ENCODE measurements at regions of chrX and their contacts with region 1.

Region 1: DNA sequence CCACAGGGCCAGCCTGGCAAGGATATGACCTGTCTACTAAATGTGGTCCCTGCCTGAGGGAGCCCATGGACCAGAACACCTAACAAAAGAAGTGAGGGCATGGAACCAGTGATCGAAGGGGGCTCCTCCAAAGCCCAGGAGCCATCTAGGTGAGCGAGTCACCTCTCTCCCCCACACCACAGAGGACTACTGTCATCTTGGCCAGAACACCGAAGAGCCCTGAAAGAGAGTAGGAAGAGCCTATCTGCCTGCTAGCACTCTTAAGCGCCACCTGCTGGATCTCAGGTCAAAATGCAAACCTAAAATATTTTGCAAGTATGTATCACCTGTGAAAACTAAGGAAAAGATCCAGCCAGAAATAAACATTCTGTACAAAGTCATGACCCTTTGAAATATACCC is 137.9 kb upstream of the ZXDB start:
- DNase-seq: peak; percentile 13
- H3K4me3 ChIP-seq: no peak overlapping the region
- H3K27ac ChIP-seq: no peak overlapping the region
- H3K4me1 ChIP-seq: no peaks in the 10 kb centered on the region
- H3K27me3 ChIP-seq: peaks cover 1% of the 10 kb centered on the region
- CTCF ChIP-seq: peak; percentile 54 to 71

Region 2: GRCh38 chrX:56661193-56661592 is 792.7 kb before region 1 on chrX:
- CTCF ChIA-PET with region 1: no interaction called
- dilution Hi-C with region 1: no loop called
- in situ Hi-C with region 1: no loop called
- intact Hi-C with region 1: no loop called
- DNase-seq: no peak
- H3K4me3 ChIP-seq: no peak overlapping the region
- H3K27ac ChIP-seq: no peak overlapping the region
- H3K4me1 ChIP-seq: no peaks in the 10 kb centered on the region
- H3K27me3 ChIP-seq: no peaks in the 10 kb centered on the region
- CTCF ChIP-seq: no peak

Region 3: GRCh38 chrX:56978172-56978571 is 475.7 kb before region 1 on chrX:
- CTCF ChIA-PET with region 1: no interaction called
- dilution Hi-C with region 1: no loop called
- in situ Hi-C with region 1: no loop called
- intact Hi-C with region 1: loop called (anchors 5 kb)
- DNase-seq: peak; percentile 63
- H3K4me3 ChIP-seq: no peak overlapping the region
- H3K27ac ChIP-seq: no peak overlapping the region
- H3K4me1 ChIP-seq: no peaks in the 10 kb centered on the region
- H3K27me3 ChIP-seq: no peaks in the 10 kb centered on the region
- CTCF ChIP-seq: peak; percentile 74 to 78

Region 4: DNA sequence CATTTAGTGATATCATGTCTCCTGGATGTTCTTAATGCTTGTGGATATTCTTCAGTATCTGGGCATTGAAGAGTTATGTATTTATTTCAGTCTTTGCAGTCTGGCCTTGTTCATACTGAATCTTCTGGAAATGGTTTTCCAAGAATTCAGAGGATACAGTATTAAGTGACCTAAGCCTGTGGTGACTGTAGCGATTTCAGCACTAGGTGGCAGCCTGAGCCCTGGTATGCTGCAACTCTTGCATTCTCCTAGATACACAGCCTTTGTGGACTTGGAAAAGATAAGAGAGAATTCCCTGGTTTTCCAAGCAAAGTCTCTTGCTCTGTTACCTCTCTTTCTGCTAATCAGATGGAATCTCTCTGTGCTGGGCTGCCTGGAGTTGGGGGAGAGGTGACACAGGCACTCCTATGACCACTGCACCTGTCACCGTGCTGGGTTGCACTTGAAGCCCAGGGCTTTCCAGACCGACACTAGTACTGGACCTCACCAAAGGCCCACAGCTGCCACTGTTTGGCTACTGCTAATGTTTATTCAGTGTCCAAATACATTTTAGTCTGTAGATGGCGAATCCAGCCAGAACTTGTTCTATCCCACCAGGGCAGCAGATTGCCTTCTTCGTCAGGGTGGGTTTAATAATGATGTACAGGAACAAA is 297.4 kb before region 1 on chrX:
- CTCF ChIA-PET with region 1: no interaction called
- dilution Hi-C with region 1: no loop called
- in situ Hi-C with region 1: no loop called
- intact Hi-C with region 1: loop called (anchors 1 kb)
- DNase-seq: peak; percentile 17
- H3K4me3 ChIP-seq: no peak overlapping the region
- H3K27ac ChIP-seq: no peak overlapping the region
- H3K4me1 ChIP-seq: no peaks in the 10 kb centered on the region
- H3K27me3 ChIP-seq: peaks cover 2% of the 10 kb centered on the region
- CTCF ChIP-seq: peak; percentile 44 to 61